Activated T-helper 1 cell treated with anti-CD3 and anti-CD28 coated beads, Interleukin-12 subunit alpha, Interleukin-12 subunit beta, Interleukin-2, Interleukin-4 antibody, amounts not matched to agents 30 ng/mL and 10 ng/mL and 1 ng/mL, durations not matched to agents 14 hours and 24 hours and 36 hours (primary cell): ENCODE measurements at regions of chr13 and their contacts with region 1.

Region 1: DNA sequence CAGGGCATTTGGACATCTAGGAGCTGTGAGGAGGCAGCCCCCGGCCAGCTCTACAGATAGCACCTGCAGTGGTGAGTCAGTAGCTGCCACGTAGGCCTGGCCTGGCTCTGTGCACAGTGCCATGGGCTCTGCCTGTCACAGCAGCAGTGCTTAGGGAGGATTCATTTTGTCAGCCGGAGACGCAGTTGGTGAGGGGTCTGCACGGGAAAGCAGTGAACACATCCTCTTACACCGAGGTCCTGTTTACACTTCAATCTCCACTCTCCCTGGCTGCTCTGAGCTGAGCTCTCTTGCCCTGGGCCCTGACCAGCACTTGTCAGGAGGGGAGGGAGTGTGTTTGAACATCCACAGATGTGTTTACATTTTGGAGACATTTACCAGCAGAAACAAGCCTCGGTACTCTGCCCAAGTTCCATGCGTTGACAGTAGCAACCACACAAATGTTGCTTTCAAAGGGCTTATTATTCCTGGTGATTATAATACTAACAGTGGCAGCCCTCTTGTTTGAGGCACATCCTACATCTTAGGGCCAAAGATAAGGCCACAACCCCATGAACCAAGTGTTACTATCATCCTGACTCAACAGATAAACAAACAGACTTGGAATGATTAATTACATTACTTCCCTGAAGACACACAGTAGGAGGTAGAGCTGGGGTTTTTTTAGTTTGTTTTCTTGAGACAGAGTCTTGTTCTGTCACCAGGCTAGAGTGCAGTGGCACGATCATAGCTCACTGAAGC is 148.9 kb downstream of the USP12 start:
- DNase-seq: no peak
- H3K4me3 Mint-ChIP-seq: no peak overlapping the region
- H3K27ac Mint-ChIP-seq: peak overlapping the region; percentile 32
- H3K4me1 Mint-ChIP-seq: peaks cover 23% of the 10 kb centered on the region
- H3K27me3 Mint-ChIP-seq: peaks cover 7% of the 10 kb centered on the region

Region 2: GRCh38 chr13:26810095-26810494 is 212.6 kb before region 1 on chr13:
- intact Hi-C with region 1: no loop called
- DNase-seq: no peak
- H3K4me3 Mint-ChIP-seq: no peak overlapping the region
- H3K27ac Mint-ChIP-seq: no peak overlapping the region
- H3K4me1 Mint-ChIP-seq: no peaks in the 10 kb centered on the region
- H3K27me3 Mint-ChIP-seq: peaks cover 7% of the 10 kb centered on the region

Region 3: GRCh38 chr13:26847281-26847680 is 175.5 kb before region 1 on chr13:
- intact Hi-C with region 1: no loop called
- DNase-seq: no peak
- H3K4me3 Mint-ChIP-seq: no peak overlapping the region
- H3K27ac Mint-ChIP-seq: no peak overlapping the region
- H3K4me1 Mint-ChIP-seq: no peaks in the 10 kb centered on the region
- H3K27me3 Mint-ChIP-seq: peaks cover 9% of the 10 kb centered on the region

Region 4: GRCh38 chr13:26965952-26966700 is 56.6 kb before region 1 on chr13:
- intact Hi-C with region 1: no loop called
- DNase-seq: no peak
- H3K4me3 Mint-ChIP-seq: no peak overlapping the region
- H3K27ac Mint-ChIP-seq: no peak overlapping the region
- H3K4me1 Mint-ChIP-seq: no peaks in the 10 kb centered on the region
- H3K27me3 Mint-ChIP-seq: peaks cover 4% of the 10 kb centered on the region

Region 5: GRCh38 chr13:26996965-26997752 is 25.6 kb before region 1 on chr13:
- intact Hi-C with region 1: loop called (anchors 1 kb)
- DNase-seq: no peak
- H3K4me3 Mint-ChIP-seq: peak overlapping the region; percentile 34
- H3K27ac Mint-ChIP-seq: peak overlapping the region; percentile 49
- H3K4me1 Mint-ChIP-seq: peaks cover 8% of the 10 kb centered on the region
- H3K27me3 Mint-ChIP-seq: peaks cover 8% of the 10 kb centered on the region

Region 6: DNA sequence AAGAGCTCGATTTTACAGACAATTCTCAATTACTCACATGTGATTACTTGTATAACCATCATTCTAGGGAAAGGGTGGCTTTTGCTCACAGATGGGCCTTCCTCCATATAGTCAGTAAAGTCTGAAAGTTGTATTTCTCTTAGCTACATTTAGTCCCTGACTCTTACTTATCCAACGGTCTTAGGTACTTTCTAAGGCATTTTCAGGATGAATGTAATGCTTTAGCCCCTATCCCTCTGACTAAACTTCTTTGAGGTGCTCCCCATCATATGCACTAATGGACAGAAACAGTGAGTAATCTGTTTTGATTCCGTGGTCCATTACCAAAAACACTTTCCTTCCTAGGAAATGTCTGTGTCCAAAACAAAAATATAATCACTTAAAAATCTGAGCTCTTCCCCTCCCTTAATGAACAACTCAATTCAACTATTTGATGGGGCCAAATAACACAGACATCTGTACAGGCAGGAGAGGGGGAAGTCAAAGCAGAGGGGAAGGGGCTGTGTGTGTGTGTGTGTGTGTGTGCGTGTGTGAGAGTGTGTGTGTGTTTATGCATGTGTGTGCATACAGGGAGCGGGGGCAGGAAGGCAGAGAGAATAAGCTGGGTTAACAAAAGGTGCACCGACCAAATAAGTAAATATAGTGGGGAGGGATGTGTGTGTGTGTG is 64.0 kb after region 1 on chr13:
- intact Hi-C with region 1: loop called (anchors 2 kb)
- DNase-seq: no peak
- H3K4me3 Mint-ChIP-seq: no peak overlapping the region
- H3K27ac Mint-ChIP-seq: peak overlapping the region; percentile 77
- H3K4me1 Mint-ChIP-seq: peaks cover 7% of the 10 kb centered on the region
- H3K27me3 Mint-ChIP-seq: no peaks in the 10 kb centered on the region

Region 7: DNA sequence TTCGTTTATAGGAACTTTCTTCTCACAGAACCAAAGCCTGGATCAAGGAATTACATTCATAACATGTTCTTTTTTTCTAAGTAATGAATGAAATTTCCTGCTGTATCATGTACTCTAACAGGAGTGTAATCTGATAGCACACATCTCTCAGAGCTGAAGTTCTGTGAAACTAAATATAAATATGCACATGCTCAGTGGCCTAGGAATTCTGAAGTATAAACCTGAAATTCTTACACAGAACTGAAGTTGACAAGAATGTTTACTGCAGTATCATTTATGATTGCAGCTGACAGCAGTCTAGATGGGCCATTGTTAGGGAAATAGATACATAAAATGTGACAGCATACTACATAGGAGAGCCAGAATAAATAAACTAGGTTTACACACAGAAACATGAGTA is 94.4 kb after region 1 on chr13:
- intact Hi-C with region 1: no loop called
- DNase-seq: no peak
- H3K4me3 Mint-ChIP-seq: no peak overlapping the region
- H3K27ac Mint-ChIP-seq: no peak overlapping the region
- H3K4me1 Mint-ChIP-seq: peaks cover 52% of the 10 kb centered on the region
- H3K27me3 Mint-ChIP-seq: no peaks in the 10 kb centered on the region

Region 8: GRCh38 chr13:27147530-27148170 is 124.9 kb after region 1 on chr13:
- intact Hi-C with region 1: loop called (anchors 1 kb)
- DNase-seq: no peak
- H3K4me3 Mint-ChIP-seq: peak overlapping the region; percentile 55
- H3K27ac Mint-ChIP-seq: peak overlapping the region; percentile 93
- H3K4me1 Mint-ChIP-seq: peaks cover 71% of the 10 kb centered on the region
- H3K27me3 Mint-ChIP-seq: no peaks in the 10 kb centered on the region